ENCODE measurements at regions of chr6 and their contacts with region 1.

Region 1: GRCh38 chr6:34248727-34249551 is at the start of gene SMIM29:
- DNase-seq: peak; percentile 99
- H3K4me3 Mint-ChIP-seq: peak within 1 kb of the TSS; percentile 88
- H3K27ac Mint-ChIP-seq: peak within 1 kb of the TSS; percentile 93
- H3K4me1 Mint-ChIP-seq: peaks cover 39% of the 10 kb centered on the region
- H3K27me3 Mint-ChIP-seq: peaks cover 8% of the 10 kb centered on the region
- total RNA-seq, gene SMIM29: 12.6 and 13.5 TPM in 2 replicates

Region 2: GRCh38 chr6:33711140-33712129 is 537.5 kb before region 1 on chr6 and contains the start of gene UQCC2:
- intact Hi-C with region 1: loop called (anchors 10 kb)
- DNase-seq: peak; percentile 99
- H3K4me3 Mint-ChIP-seq: peak within 1 kb of the TSS; percentile 97
- H3K27ac Mint-ChIP-seq: peak within 1 kb of the TSS; percentile 98
- H3K4me1 Mint-ChIP-seq: peaks cover 36% of the 10 kb centered on the region
- H3K27me3 Mint-ChIP-seq: peaks cover 4% of the 10 kb centered on the region
- total RNA-seq, gene UQCC2: 131 and 137 TPM in 2 replicates

Region 3: DNA sequence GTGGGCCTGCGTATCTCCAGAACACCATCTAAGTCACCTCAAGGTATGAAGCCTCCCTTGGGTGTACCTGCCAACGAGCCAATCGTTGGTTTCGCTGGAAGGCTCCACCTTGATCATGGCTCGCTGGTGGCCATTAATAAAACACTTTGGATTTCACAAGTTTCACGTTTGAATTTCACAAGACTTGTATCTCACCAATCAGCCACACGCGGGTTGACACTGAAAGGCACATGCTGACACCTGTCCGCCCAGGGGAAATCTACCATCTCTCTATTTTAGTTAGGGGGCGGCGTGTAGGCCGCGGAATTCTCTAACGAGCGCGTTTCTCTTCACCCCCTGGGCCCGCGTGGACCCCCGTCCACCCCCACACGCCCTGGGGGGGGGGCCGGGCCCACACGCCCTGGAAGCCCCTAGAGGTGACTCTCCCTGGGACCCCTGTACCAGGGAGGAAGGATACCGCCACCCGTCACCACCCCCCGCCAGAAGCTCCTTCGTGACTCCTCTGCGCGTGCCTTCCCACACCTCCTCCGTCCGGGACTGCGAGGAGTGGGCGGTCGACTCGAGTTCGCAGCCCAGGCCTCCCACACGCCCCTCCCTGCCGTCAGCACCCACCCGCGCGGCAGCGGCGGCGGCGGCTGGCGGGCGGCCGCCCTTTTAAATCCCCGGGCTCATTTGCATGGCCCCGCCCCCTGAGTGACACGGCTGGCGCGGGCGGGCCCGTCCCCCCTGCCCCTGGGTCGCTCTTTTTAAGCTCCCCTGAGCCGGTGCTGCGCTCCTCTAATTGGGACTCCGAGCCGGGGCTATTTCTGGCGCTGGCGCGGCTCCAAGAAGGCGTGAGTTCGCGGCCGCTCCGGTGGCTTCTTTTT is 12.6 kb before region 1 on chr6 and contains the start of gene HMGA1:
- intact Hi-C with region 1: loop called (anchors 1 kb)
- DNase-seq: peak; percentile 96
- H3K4me3 Mint-ChIP-seq: peak within 1 kb of the TSS; percentile 91
- H3K27ac Mint-ChIP-seq: peak within 1 kb of the TSS; percentile 95
- H3K4me1 Mint-ChIP-seq: peaks cover 32% of the 10 kb centered on the region
- H3K27me3 Mint-ChIP-seq: no peaks in the 10 kb centered on the region
- total RNA-seq, gene HMGA1: 509 and 520 TPM in 2 replicates

Region 4: GRCh38 chr6:34414999-34415858 is 166.3 kb after region 1 on chr6:
- intact Hi-C with region 1: loop called (anchors 1 kb)
- DNase-seq: peak; percentile 83
- H3K4me3 Mint-ChIP-seq: no peak overlapping the region
- H3K27ac Mint-ChIP-seq: peak overlapping the region; percentile 34
- H3K4me1 Mint-ChIP-seq: peaks cover 15% of the 10 kb centered on the region
- H3K27me3 Mint-ChIP-seq: no peaks in the 10 kb centered on the region

Region 5: GRCh38 chr6:34656378-34657036 is 407.6 kb after region 1 on chr6:
- intact Hi-C with region 1: loop called (anchors 10 kb)
- DNase-seq: peak; percentile 76
- H3K4me3 Mint-ChIP-seq: peak overlapping the region; percentile 78
- H3K27ac Mint-ChIP-seq: peak overlapping the region; percentile 90
- H3K4me1 Mint-ChIP-seq: peaks cover 36% of the 10 kb centered on the region
- H3K27me3 Mint-ChIP-seq: no peaks in the 10 kb centered on the region

Measured in activated CD4-positive, alpha-beta T cell treated with anti-CD3 and anti-CD28 coated beads, Interleukin-2, amount 10 ng/mL, durations not matched to agents 24 days and 14 days (primary cell).